Motor neuron (in vitro differentiated cells): ENCODE measurements at regions of chr1 and their contacts with region 1.

Region 1: GRCh38 chr1:226827968-226828513 is 42.4 kb upstream of the PSEN2 start:
- ATAC-seq: peak; percentile 100
- H3K4me3 ChIP-seq: no peak overlapping the region
- H3K27ac ChIP-seq: no peak overlapping the region
- H3K4me1 ChIP-seq: peaks cover 0 to 12% of the 10 kb centered on the region in 2 donors

Region 2: GRCh38 chr1:226223786-226224244 is 604.2 kb before region 1 on chr1:
- in situ Hi-C with region 1: no loop called
- ATAC-seq: peak; percentile 21 to 87 (median 75)
- H3K4me3 ChIP-seq: peak overlapping the region; percentile 33 to 43 (median 37)
- H3K27ac ChIP-seq: no peak overlapping the region
- H3K4me1 ChIP-seq: no peaks in the 10 kb centered on the region

Region 3: DNA sequence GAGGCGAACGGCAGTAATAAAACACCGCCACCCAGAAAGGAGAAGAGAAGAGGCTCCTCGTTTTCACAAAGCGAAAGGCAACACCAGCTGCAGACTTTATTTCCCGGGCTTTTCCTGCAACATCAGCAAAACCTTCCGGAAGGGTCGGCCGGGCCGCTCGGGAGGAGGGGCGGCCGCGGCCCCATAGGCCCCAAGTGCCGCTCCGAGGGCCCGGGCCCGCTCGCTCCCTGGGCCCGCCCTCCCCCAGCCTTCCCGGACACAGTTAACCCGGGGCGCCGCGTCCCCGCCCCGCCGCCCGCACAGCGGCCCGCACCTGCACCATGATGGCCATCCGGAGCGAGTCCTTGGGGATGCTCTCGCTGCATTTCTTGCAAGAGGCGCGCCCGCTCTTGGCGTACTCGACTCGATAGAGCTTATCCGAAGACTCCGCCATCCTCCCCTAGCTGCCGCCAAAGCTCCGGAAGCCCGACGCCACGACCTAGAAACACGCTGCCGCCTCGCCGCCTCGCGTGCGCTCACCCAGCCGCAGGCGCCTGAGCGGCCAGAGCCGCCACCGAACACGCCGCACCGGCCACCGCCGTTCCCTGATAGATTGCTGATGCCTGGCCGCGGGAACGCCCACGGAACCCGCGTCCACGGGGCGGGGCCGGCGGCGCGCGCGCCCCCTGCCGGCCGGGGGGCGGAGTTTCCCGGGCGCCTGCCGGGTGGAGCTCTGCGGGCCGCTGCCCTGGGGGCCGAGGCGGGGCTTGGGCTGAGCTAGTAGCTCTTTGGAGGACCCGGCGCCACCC is 420.4 kb before region 1 on chr1 and contains the start of gene PARP1:
- in situ Hi-C with region 1: loop called in 1 of 9 experiments (anchors 25 kb)
- ATAC-seq: peak; percentile 83 to 94 (median 92)
- H3K4me3 ChIP-seq: peak within 1 kb of the TSS; percentile 53 to 73 (median 61)
- H3K27ac ChIP-seq: peak within 1 kb of the TSS; percentile 59 to 66
- H3K4me1 ChIP-seq: peaks cover 38 to 42% of the 10 kb centered on the region in 2 donors
- total RNA-seq, gene PARP1: 51.4 to 243 (median 118) TPM

Region 4: GRCh38 chr1:226634166-226634588 is 193.9 kb before region 1 on chr1:
- in situ Hi-C with region 1: loop called in 8 of 9 experiments (anchors 10 to 25 kb)
- ATAC-seq: peak; percentile 82 to 96 (median 92)
- H3K4me3 ChIP-seq: no peak overlapping the region
- H3K27ac ChIP-seq: no peak overlapping the region
- H3K4me1 ChIP-seq: peaks cover 0 to 7% of the 10 kb centered on the region in 2 donors

Region 5: DNA sequence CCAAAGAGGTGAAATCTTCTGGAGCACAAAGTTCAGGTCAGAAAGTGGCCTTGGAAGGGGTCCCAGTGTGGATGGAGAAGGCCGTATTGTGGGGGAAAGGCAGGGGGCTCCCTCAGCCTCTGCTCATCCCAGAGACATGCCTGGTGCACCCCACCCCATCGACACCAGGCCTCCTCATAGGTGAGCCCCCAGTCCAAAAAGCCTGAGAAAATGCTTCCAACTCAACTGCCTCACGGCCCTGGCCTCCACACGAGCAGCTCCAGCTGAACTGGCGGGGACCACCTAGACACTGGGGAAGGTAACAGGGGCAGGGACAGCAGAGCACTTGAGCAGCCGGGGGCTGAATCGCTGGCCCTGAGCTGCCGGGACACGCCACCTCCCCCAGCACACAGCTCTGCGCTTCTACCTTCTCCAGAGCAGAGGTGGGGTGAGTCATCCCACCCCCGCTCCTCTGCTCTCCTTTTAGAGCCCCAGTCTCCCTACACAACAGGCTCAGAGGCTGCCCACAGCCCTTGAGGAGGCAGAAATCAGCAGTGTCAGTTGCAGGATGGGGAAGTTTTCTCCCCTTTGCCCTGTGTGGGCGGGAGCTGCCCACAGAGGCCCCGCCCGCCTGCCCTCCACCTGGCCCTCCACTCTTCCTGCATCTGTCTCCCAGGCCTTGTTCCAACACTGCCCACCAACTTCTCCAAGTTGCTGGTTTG is 185.0 kb before region 1 on chr1:
- in situ Hi-C with region 1: loop called (anchors 5 to 25 kb)
- ATAC-seq: peak in 5 of 8 experiments; percentile 78 to 88 (median 84)
- H3K4me3 ChIP-seq: no peak overlapping the region
- H3K27ac ChIP-seq: no peak overlapping the region
- H3K4me1 ChIP-seq: peaks cover 0 to 7% of the 10 kb centered on the region in 2 donors